Thyroid gland (tissue), 4 donors: ENCODE measurements at regions of chr5 and their contacts with region 1.

Region 1: GRCh38 chr5:36519881-36520280 is 86.5 kb upstream of the SLC1A3 start:
- DNase-seq: no peak
- H3K4me3 ChIP-seq: no peak overlapping the region
- H3K27ac ChIP-seq: no peak overlapping the region
- H3K4me1 ChIP-seq: peaks cover 8 to 12% of the 10 kb centered on the region in 2 donors
- H3K27me3 ChIP-seq: no peaks in the 10 kb centered on the region
- CTCF ChIP-seq: no peak
- POLR2A ChIP-seq: no peak

Region 2: GRCh38 chr5:36690041-36690961 is 170.4 kb after region 1 on chr5:
- intact Hi-C with region 1: loop called (anchors 10 kb)
- DNase-seq: peak; percentile 77 to 84
- H3K4me3 ChIP-seq: peak overlapping the region; percentile 48 to 79 (median 56)
- H3K27ac ChIP-seq: peak overlapping the region; percentile 34 to 67 (median 58)
- H3K4me1 ChIP-seq: peaks cover 11 to 15% of the 10 kb centered on the region in 2 donors
- H3K27me3 ChIP-seq: no peaks in the 10 kb centered on the region
- CTCF ChIP-seq: peak; percentile 51 to 87 (median 80)
- POLR2A ChIP-seq: no peak